ENCODE measurements at regions of chr9 and their contacts with region 1.

Region 1: GRCh38 chr9:3732077-3733038 is 206.6 kb upstream of the RFX3 start:
- DNase-seq: peak; percentile 66
- H3K4me3 Mint-ChIP-seq: no peak overlapping the region
- H3K27ac Mint-ChIP-seq: no peak overlapping the region
- H3K4me1 Mint-ChIP-seq: peaks cover 16% of the 10 kb centered on the region
- H3K27me3 Mint-ChIP-seq: no peaks in the 10 kb centered on the region
- CTCF ChIP-seq: peak; percentile 29

Region 2: GRCh38 chr9:3848445-3849114 is 116.2 kb after region 1 on chr9:
- CTCF ChIA-PET with region 1: interaction called, 6 read pairs
- intact Hi-C with region 1: loop called (anchors 2 kb)
- DNase-seq: peak; percentile 46
- H3K4me3 Mint-ChIP-seq: no peak overlapping the region
- H3K27ac Mint-ChIP-seq: peak overlapping the region; percentile 52
- H3K4me1 Mint-ChIP-seq: peaks cover 8% of the 10 kb centered on the region
- H3K27me3 Mint-ChIP-seq: no peaks in the 10 kb centered on the region
- CTCF ChIP-seq: no peak

Region 3: DNA sequence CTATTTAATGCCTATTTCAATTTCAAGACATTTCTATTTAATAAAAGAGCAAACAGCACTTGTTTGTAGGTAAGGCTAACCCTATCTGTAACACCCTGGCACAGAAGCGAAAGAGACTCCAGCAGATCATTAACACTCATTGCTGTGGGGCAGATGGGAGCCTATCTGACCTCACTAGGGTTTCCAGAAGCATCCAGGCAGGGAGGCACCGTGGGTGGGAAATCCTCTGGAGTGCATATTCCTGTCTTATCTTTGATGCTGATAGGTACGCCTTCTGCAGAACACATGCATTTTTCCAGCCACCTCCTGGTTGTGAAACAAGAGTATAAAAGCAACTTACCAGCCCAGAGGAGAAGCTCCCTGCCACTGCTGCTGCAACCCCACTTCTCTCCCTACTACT is 333.8 kb after region 1 on chr9:
- CTCF ChIA-PET with region 1: no interaction called
- intact Hi-C with region 1: loop called (anchors 10 kb)
- DNase-seq: no peak
- H3K4me3 Mint-ChIP-seq: no peak overlapping the region
- H3K27ac Mint-ChIP-seq: no peak overlapping the region
- H3K4me1 Mint-ChIP-seq: peaks cover 29% of the 10 kb centered on the region
- H3K27me3 Mint-ChIP-seq: no peaks in the 10 kb centered on the region
- CTCF ChIP-seq: no peak

Region 4: DNA sequence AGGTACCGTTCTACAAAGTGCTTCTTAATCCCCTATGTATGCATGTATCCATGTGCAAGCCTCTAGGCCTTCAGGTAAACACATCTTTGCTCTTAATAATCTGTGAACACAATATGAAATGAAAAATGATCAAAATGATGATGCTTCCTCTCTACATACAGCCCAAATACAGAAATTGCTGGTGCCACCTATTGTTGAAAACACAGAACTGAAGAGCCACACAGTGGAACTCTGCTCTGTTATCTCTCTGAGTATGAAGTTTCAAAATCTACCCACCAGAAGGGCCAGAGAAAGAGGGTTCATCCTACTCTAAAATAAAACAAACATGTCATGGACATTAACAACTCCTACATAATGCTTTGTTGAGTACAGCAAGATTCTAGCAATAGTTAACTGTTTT is 496.2 kb after region 1 on chr9:
- CTCF ChIA-PET with region 1: interaction called, 4 read pairs
- intact Hi-C with region 1: loop called (anchors 2 kb)
- DNase-seq: no peak
- H3K4me3 Mint-ChIP-seq: no peak overlapping the region
- H3K27ac Mint-ChIP-seq: peak overlapping the region; percentile 58
- H3K4me1 Mint-ChIP-seq: peaks cover 66% of the 10 kb centered on the region
- H3K27me3 Mint-ChIP-seq: no peaks in the 10 kb centered on the region
- CTCF ChIP-seq: no peak

Region 5: GRCh38 chr9:4339357-4339756 is 607.0 kb after region 1 on chr9:
- CTCF ChIA-PET with region 1: no interaction called
- intact Hi-C with region 1: loop called (anchors 1 kb)
- DNase-seq: peak; percentile 75
- H3K4me3 Mint-ChIP-seq: peak overlapping the region; percentile 24
- H3K27ac Mint-ChIP-seq: peak overlapping the region; percentile 86
- H3K4me1 Mint-ChIP-seq: peaks cover 14% of the 10 kb centered on the region
- H3K27me3 Mint-ChIP-seq: no peaks in the 10 kb centered on the region
- CTCF ChIP-seq: peak; percentile 66

Region 6: GRCh38 chr9:4375424-4376200 is 643.3 kb after region 1 on chr9:
- CTCF ChIA-PET with region 1: no interaction called
- intact Hi-C with region 1: loop called (anchors 10 kb)
- DNase-seq: no peak
- H3K4me3 Mint-ChIP-seq: no peak overlapping the region
- H3K27ac Mint-ChIP-seq: no peak overlapping the region
- H3K4me1 Mint-ChIP-seq: peaks cover 6% of the 10 kb centered on the region
- H3K27me3 Mint-ChIP-seq: no peaks in the 10 kb centered on the region
- CTCF ChIP-seq: no peak